Heart left ventricle (tissue), 16 donors: ENCODE measurements at regions of chr19 and their contacts with region 1.

Region 1: GRCh38 chr19:10332955-10333757 is at the start of gene RAVER1:
- DNase-seq: peak; percentile 98 to 99 (median 99)
- ATAC-seq: peak; percentile 93 to 95 (median 94)
- H3K4me3 ChIP-seq: peak within 1 kb of the TSS; percentile 50 to 90 (median 71)
- H3K27ac ChIP-seq: peak within 1 kb of the TSS; percentile 26 to 94 (median 90)
- H3K4me1 ChIP-seq: peaks cover 0 to 36% (median 24%) of the 10 kb centered on the region in 12 donors
- H3K27me3 ChIP-seq: no peaks in the 10 kb centered on the region
- CTCF ChIP-seq: peak in 1 of 12 donors; percentile 12
- POLR2A ChIP-seq: peak in 1 of 2 donors; percentile 81
- total RNA-seq, gene RAVER1: 11.5 to 22.5 (median 14.0) TPM

Region 2: GRCh38 chr19:10269333-10270179 is 63.6 kb before region 1 on chr19:
- intact Hi-C with region 1: loop called in 4 of 10 experiments (anchors 1 to 5 kb)
- DNase-seq: peak; percentile 87 to 94 (median 90)
- ATAC-seq: peak; percentile 79 to 88 (median 84)
- H3K4me3 ChIP-seq: peak overlapping the region; percentile 19 to 78 (median 60)
- H3K27ac ChIP-seq: peak overlapping the region; percentile 69 to 99 (median 88)
- H3K4me1 ChIP-seq: peaks cover 0 to 73% (median 17%) of the 10 kb centered on the region in 12 donors
- H3K27me3 ChIP-seq: peaks cover 0 to 23% (median 3%) of the 10 kb centered on the region in 9 donors
- CTCF ChIP-seq: peak; percentile 94 to 98 (median 96)
- POLR2A ChIP-seq: no peak

Region 3: GRCh38 chr19:10289167-10289835 is 43.9 kb before region 1 on chr19:
- intact Hi-C with region 1: loop called in 1 of 10 experiments (anchors 5 kb)
- DNase-seq: peak in 2 of 5 donors; percentile 11 to 60
- ATAC-seq: no peak
- H3K4me3 ChIP-seq: peak overlapping the region in 10 of 12 donors; percentile 20 to 60 (median 35)
- H3K27ac ChIP-seq: no peak overlapping the region
- H3K4me1 ChIP-seq: peaks cover 5 to 93% (median 61%) of the 10 kb centered on the region in 12 donors
- H3K27me3 ChIP-seq: peaks cover 30 to 77% (median 66%) of the 10 kb centered on the region in 9 donors
- CTCF ChIP-seq: no peak
- POLR2A ChIP-seq: no peak

Region 4: DNA sequence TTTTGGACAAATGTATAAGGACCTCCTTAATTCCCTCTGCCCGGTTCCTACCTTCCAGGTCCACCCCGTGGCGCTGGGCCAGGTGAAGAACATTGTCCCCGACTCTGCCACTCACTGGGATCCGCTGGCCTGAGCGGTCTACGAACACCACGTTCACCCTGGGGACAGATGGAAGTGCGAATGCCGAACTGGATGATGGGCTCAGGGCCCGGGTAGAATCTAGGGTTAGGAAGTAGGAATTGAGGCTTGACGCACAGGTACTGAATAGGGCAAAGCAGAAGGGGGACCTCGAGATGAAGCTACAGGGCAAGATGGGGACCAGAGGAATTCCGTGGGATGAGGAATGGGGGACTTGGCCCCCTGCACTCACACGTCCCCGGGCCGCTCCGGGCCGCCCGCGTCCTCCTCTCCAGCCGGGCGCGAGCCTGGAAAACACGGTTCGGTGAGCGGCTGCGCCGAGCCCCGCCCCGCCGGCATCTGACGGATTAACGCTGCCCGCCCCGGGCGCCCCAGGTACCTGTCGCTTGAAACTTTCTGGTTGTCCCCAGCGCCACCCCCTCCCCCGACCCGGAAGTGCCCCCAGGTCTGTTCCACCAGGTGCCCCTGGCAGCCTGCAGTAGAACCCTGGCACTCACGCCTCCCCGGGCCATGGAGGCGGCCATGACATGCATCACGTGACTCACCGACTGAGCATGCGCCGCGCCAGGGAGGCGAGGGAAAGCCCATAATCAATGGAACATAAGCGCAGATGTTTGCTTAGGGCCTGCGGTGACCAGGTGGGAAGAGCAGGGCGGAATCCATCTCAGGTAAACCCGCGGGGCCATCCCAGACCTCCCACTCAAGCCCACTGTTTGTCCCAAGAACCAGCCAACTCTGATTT is 17.6 kb before region 1 on chr19 and contains the start of gene FDX2:
- intact Hi-C with region 1: loop called in 1 of 10 experiments (anchors 2 kb)
- DNase-seq: peak; percentile 84 to 94 (median 90)
- ATAC-seq: peak; percentile 82 to 95 (median 92)
- H3K4me3 ChIP-seq: peak within 1 kb of the TSS; percentile 52 to 95 (median 80)
- H3K27ac ChIP-seq: peak within 1 kb of the TSS in 11 of 12 donors; percentile 12 to 77 (median 46)
- H3K4me1 ChIP-seq: peaks cover 0 to 20% (median 13%) of the 10 kb centered on the region in 12 donors
- H3K27me3 ChIP-seq: no peaks in the 10 kb centered on the region
- CTCF ChIP-seq: no peak
- POLR2A ChIP-seq: peak in 1 of 2 donors; percentile 18
- total RNA-seq, gene FDX2: 12.8 to 22.0 (median 16.6) TPM

Region 5: GRCh38 chr19:10380313-10381102 is 47.4 kb after region 1 on chr19 and contains the start of gene TYK2:
- intact Hi-C with region 1: loop called in 5 of 10 experiments (anchors 2 to 10 kb)
- DNase-seq: peak; percentile 97 to 98 (median 98)
- ATAC-seq: peak; percentile 99
- H3K4me3 ChIP-seq: peak within 1 kb of the TSS; percentile 71 to 99 (median 90)
- H3K27ac ChIP-seq: peak within 1 kb of the TSS; percentile 41 to 90 (median 82)
- H3K4me1 ChIP-seq: peaks cover 0 to 37% (median 12%) of the 10 kb centered on the region in 12 donors
- H3K27me3 ChIP-seq: no peaks in the 10 kb centered on the region
- CTCF ChIP-seq: no peak
- POLR2A ChIP-seq: peak in 1 of 2 donors; percentile 66
- total RNA-seq, gene TYK2: 37.7 to 86.3 (median 55.3) TPM